GM23248 (cell line): ENCODE measurements at regions of chr17 and their contacts with region 1.

Region 1: GRCh38 chr17:76278952-76279741 is 14.0 kb downstream of the UBALD2 start:
- DNase-seq: peak; percentile 81
- H3K4me3 ChIP-seq: no peak overlapping the region
- H3K27ac ChIP-seq: no peak overlapping the region
- H3K4me1 ChIP-seq: peaks cover 9% of the 10 kb centered on the region
- H3K27me3 ChIP-seq: no peaks in the 10 kb centered on the region

Region 2: DNA sequence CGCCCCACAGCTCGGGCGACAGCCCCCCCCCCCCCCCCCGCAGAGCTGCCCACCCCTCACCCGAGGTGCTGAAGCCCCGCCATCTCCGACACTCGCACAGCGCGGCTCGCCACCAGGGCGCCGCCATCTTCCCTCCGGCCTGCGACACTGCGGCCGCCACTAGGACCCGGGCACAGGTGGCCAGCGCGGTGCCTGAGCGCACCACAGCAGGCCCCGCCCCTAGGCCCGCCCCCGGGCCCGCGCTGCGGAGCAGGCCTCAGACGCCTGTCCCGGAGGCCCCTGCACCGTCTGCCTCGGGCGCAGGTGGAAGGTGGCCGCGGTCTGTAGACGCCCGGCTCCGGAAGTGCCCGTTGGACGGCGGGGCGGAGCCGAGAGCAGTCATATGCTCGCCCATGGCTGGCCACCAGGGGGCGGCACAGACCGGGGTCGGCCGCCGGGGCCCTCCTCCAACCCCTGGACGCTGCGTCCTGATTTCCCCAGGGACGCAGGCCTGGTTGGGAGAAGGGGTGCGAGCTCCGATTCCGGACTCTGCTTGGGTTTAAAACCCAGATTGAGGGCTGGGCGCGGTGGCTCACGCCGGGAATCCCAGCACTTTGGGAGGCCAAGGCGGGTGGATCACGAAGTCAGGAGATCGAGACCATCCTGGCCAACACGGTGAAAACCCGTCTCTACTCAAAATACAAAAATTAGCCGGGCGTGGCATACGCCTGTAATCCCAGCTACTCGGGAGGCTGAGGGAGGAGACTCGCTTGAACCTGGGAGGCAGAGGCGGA is 374.2 kb before region 1 on chr17 and contains the start of gene MRPL38:
- in situ Hi-C with region 1: loop called (anchors 25 kb)
- DNase-seq: peak; percentile 95
- H3K4me3 ChIP-seq: peak within 1 kb of the TSS; percentile 79
- H3K27ac ChIP-seq: peak within 1 kb of the TSS; percentile 56
- H3K4me1 ChIP-seq: peaks cover 12% of the 10 kb centered on the region
- H3K27me3 ChIP-seq: no peaks in the 10 kb centered on the region
- total RNA-seq, gene MRPL38: 18.8 and 36.9 TPM in 2 replicates